Activated CD4-positive, alpha-beta T cell treated with anti-CD3 and anti-CD28 coated beads, Interleukin-2, amount 10 ng/mL, durations not matched to agents 24 days and 14 days (primary cell): ENCODE measurements at regions of chr1 and their contacts with region 1.

Region 1: GRCh38 chr1:52056163-52056936 is at the start of gene BTF3L4:
- DNase-seq: peak; percentile 98
- H3K4me3 Mint-ChIP-seq: peak within 1 kb of the TSS; percentile 92
- H3K27ac Mint-ChIP-seq: peak within 1 kb of the TSS; percentile 100
- H3K4me1 Mint-ChIP-seq: peaks cover 46% of the 10 kb centered on the region
- H3K27me3 Mint-ChIP-seq: no peaks in the 10 kb centered on the region
- total RNA-seq, gene BTF3L4: 48.0 and 50.0 TPM in 2 replicates

Region 2: DNA sequence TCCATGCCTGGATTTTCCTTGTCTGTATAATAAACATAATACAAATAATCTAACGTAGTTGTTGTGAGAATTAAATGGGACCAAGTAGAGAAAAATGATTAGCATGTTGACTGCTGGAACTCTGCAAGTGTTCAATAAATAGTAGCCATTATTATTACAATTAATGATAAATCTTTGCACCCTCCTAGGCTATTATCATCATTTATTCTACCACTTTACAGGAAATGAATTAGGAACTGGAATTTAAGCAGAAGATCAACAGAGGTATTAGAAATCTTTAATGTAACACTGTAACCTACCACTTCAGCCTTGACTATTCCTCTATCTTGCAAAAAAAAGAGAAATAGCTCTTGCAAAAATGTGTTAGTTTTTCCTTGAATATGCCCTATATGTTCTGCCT is 664.1 kb before region 1 on chr1:
- intact Hi-C with region 1: no loop called
- DNase-seq: no peak
- H3K4me3 Mint-ChIP-seq: no peak overlapping the region
- H3K27ac Mint-ChIP-seq: no peak overlapping the region
- H3K4me1 Mint-ChIP-seq: no peaks in the 10 kb centered on the region
- H3K27me3 Mint-ChIP-seq: no peaks in the 10 kb centered on the region

Region 3: DNA sequence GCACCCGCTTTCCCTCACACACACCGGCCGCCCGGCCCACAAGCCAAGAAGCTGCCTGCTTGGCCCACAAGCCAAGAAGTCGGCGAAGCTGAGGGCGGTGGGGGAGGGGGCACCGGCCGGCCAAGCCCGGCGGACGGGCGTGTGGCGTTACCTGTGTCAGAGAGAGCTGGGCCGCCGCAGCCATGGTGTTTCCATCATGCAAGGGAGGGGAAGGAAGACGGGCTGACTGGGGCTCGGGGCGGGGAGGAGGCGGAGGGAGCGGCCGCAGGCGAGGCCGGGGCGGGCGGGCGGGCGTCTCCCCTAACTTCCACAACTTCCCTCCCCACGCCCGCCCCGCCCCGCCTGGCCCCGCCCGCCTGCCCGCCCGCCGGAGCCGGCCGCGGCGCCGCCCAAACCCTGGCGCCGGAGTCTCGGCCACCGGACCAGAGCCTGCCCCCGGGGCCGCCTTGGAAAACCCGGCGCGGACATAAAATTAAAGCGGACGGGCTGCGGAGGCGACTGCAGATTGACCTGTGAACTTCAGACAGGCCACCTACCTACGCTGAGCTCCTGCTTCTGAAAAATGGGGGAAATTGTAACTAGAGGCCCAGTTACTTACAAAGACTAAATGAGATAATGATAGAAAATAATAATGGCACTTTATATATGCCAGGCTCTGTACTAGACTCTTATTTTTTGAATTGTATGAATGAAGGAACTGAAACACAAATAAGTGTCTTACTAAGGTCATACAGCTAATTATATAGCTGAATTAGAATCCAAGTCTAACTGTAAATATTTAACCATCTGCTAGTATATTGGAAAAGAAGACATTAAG is 537.1 kb before region 1 on chr1 and contains the start of gene EPS15:
- intact Hi-C with region 1: loop called (anchors 10 kb)
- DNase-seq: peak; percentile 95
- H3K4me3 Mint-ChIP-seq: peak within 1 kb of the TSS; percentile 88
- H3K27ac Mint-ChIP-seq: peak within 1 kb of the TSS; percentile 89
- H3K4me1 Mint-ChIP-seq: peaks cover 48% of the 10 kb centered on the region
- H3K27me3 Mint-ChIP-seq: no peaks in the 10 kb centered on the region
- total RNA-seq, gene EPS15: 55.0 and 62.6 TPM in 2 replicates

Region 4: GRCh38 chr1:51878616-51879336 is 177.6 kb before region 1 on chr1 and contains the start of gene NRDC:
- intact Hi-C with region 1: loop called (anchors 1 kb)
- DNase-seq: peak; percentile 100
- H3K4me3 Mint-ChIP-seq: no peak within 1 kb of the TSS
- H3K27ac Mint-ChIP-seq: no peak within 1 kb of the TSS
- H3K4me1 Mint-ChIP-seq: peaks cover 28% of the 10 kb centered on the region
- H3K27me3 Mint-ChIP-seq: peaks cover 8% of the 10 kb centered on the region
- total RNA-seq, gene NRDC: 170 and 175 TPM in 2 replicates

Region 5: GRCh38 chr1:52141513-52142219 is 85.3 kb after region 1 on chr1 and contains the start of gene ZFYVE9:
- intact Hi-C with region 1: loop called (anchors 2 kb)
- DNase-seq: peak; percentile 92
- H3K4me3 Mint-ChIP-seq: peak within 1 kb of the TSS; percentile 81
- H3K27ac Mint-ChIP-seq: peak within 1 kb of the TSS; percentile 74
- H3K4me1 Mint-ChIP-seq: peaks cover 22% of the 10 kb centered on the region
- H3K27me3 Mint-ChIP-seq: peaks cover 33% of the 10 kb centered on the region
- total RNA-seq, gene ZFYVE9: 3.9 and 4.3 TPM in 2 replicates

Region 6: GRCh38 chr1:52404116-52404986 is 348.0 kb after region 1 on chr1 and contains the starts of genes ORC1 and PRPF38A:
- intact Hi-C with region 1: loop called (anchors 1 kb)
- DNase-seq: peak; percentile 99
- H3K4me3 Mint-ChIP-seq: peak within 1 kb of the TSS; percentile 99
- H3K27ac Mint-ChIP-seq: peak within 1 kb of the TSS; percentile 100
- H3K4me1 Mint-ChIP-seq: peaks cover 47% of the 10 kb centered on the region
- H3K27me3 Mint-ChIP-seq: no peaks in the 10 kb centered on the region
- total RNA-seq, gene ORC1: 43.5 and 44.2 TPM in 2 replicates
- total RNA-seq, gene PRPF38A: 106 and 108 TPM in 2 replicates

Region 7: DNA sequence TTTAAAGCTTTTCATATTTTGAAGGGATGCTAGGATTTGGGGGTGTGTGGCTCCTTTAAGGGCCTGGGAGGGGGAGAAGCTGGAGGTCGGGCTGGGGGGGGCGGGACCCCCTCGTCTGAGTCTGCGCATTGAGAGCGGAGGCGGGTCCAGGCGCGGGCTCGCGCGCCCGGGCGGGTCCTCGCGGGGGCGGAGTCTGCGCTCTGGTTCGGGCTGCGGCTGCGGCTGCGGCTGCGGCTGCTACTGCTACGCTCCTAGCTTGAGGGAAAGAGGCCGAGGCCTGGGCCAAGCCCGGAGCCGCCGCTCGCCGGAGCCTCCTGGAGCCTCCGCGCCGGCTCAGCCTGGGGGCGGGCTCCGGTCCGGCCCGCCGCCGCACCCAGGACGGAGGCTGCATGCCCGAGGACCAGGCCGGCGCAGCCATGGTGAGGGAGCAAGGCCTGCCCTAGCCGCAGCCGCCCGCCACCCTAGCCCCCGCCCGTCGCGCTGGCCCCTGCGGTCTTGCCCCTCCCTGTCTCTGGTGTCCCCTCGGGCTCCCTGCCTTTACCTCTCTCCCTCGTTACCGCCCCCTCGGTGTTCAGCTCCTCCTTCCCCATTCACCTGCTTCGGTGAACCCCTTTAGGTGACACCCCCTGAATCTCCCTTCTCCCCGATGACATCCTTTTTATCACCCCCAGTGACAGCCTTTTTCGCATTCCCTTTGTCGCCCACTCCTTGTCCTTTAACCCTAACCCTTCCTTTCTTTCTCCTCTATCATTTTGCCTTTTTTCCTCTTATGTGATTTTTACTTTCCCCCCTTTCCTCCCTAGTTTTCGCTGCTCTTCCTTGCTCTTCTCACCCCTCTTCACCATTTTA is 670.1 kb after region 1 on chr1 and contains the start of gene ZYG11B:
- intact Hi-C with region 1: loop called (anchors 10 kb)
- DNase-seq: peak; percentile 97
- H3K4me3 Mint-ChIP-seq: peak within 1 kb of the TSS; percentile 91
- H3K27ac Mint-ChIP-seq: peak within 1 kb of the TSS; percentile 80
- H3K4me1 Mint-ChIP-seq: peaks cover 30% of the 10 kb centered on the region
- H3K27me3 Mint-ChIP-seq: peaks cover 2% of the 10 kb centered on the region
- total RNA-seq, gene ZYG11B: 9.3 and 10.2 TPM in 2 replicates

Region 8: DNA sequence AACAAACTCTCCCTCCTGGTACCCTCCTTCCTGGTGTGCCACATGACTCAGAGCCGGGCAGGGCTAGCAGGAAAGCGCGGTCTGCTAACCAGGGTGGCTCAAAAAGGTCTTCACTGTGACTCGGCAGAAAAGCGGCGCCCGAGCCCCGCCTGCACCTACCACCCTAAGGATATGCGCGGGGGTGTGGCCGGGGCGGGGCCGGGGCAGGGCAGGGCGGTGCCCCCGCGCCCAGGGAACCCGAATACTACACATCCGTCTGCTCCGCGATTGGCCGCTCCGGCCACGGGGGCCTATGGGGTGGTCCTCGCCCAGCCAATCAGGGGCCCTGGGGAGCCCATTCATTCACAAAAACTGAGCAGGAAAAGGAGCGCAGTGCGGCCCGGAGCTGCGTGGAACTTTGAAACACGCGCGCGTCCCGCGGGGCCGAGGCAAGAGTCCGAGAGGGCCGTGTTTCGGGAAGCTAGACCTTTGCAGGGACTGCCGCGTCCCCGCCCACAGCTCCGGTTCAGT is 1269.8 kb after region 1 on chr1:
- intact Hi-C with region 1: loop called (anchors 5 kb)
- DNase-seq: peak; percentile 98
- H3K4me3 Mint-ChIP-seq: peak overlapping the region; percentile 99
- H3K27ac Mint-ChIP-seq: peak overlapping the region; percentile 97
- H3K4me1 Mint-ChIP-seq: peaks cover 40% of the 10 kb centered on the region
- H3K27me3 Mint-ChIP-seq: no peaks in the 10 kb centered on the region